MCF 10A (cell line): ENCODE measurements at regions of chr19 and their contacts with region 1.

Region 1: GRCh38 chr19:33176670-33177416 is 17.3 kb upstream of the LRP3 start:
- DNase-seq: peak; percentile 99
- H3K4me3 Mint-ChIP-seq: peak overlapping the region; percentile 93
- H3K27ac Mint-ChIP-seq: peak overlapping the region; percentile 66
- H3K4me1 Mint-ChIP-seq: peaks cover 9% of the 10 kb centered on the region
- H3K27me3 Mint-ChIP-seq: no peaks in the 10 kb centered on the region
- CTCF ChIP-seq: no peak

Region 2: GRCh38 chr19:33086955-33087354 is 89.9 kb before region 1 on chr19:
- CTCF ChIA-PET with region 1: no interaction called
- POLR2A ChIA-PET with region 1: no interaction called
- intact Hi-C with region 1: no loop called
- DNase-seq: no peak
- H3K4me3 Mint-ChIP-seq: no peak overlapping the region
- H3K27ac Mint-ChIP-seq: no peak overlapping the region
- H3K4me1 Mint-ChIP-seq: peaks cover 2% of the 10 kb centered on the region
- H3K27me3 Mint-ChIP-seq: no peaks in the 10 kb centered on the region
- CTCF ChIP-seq: no peak

Region 3: GRCh38 chr19:33098023-33098652 is 78.7 kb before region 1 on chr19:
- CTCF ChIA-PET with region 1: no interaction called
- POLR2A ChIA-PET with region 1: no interaction called
- intact Hi-C with region 1: no loop called
- DNase-seq: peak; percentile 29
- H3K4me3 Mint-ChIP-seq: no peak overlapping the region
- H3K27ac Mint-ChIP-seq: no peak overlapping the region
- H3K4me1 Mint-ChIP-seq: peaks cover 12% of the 10 kb centered on the region
- H3K27me3 Mint-ChIP-seq: no peaks in the 10 kb centered on the region
- CTCF ChIP-seq: no peak

Region 4: DNA sequence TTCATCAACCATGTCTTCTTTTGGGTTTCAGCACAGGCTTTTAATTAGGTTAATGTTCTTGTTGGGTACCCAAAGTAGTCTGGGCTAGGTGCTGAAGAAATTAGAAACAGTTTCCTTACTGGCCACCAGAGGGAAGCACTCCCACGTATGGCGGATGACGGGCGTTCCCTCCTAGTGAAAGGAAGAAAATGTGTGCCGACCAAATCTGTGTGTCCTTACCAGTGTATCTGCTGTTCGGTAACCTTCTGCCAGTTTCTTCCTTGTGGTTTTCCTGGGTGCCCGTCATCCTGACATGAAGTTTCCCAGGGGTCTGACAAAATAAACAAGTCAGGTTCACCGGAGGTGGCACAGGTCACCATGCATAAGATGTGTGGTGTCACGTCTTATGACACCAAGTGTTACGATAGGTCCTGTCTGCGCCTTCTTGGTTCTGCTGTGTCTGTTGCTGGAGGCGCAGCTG is 50.9 kb before region 1 on chr19:
- CTCF ChIA-PET with region 1: interaction called, 17 read pairs
- POLR2A ChIA-PET with region 1: interaction called, 3 read pairs
- intact Hi-C with region 1: loop called (anchors 2 kb)
- DNase-seq: peak; percentile 71
- H3K4me3 Mint-ChIP-seq: no peak overlapping the region
- H3K27ac Mint-ChIP-seq: no peak overlapping the region
- H3K4me1 Mint-ChIP-seq: no peaks in the 10 kb centered on the region
- H3K27me3 Mint-ChIP-seq: no peaks in the 10 kb centered on the region
- CTCF ChIP-seq: peak; percentile 72

Region 5: GRCh38 chr19:33156334-33156733 is 20.5 kb before region 1 on chr19:
- CTCF ChIA-PET with region 1: interaction called, 11 read pairs
- POLR2A ChIA-PET with region 1: interaction called, 13 read pairs
- intact Hi-C with region 1: no loop called
- DNase-seq: peak; percentile 80
- H3K4me3 Mint-ChIP-seq: no peak overlapping the region
- H3K27ac Mint-ChIP-seq: no peak overlapping the region
- H3K4me1 Mint-ChIP-seq: no peaks in the 10 kb centered on the region
- H3K27me3 Mint-ChIP-seq: no peaks in the 10 kb centered on the region
- CTCF ChIP-seq: no peak

Region 6: DNA sequence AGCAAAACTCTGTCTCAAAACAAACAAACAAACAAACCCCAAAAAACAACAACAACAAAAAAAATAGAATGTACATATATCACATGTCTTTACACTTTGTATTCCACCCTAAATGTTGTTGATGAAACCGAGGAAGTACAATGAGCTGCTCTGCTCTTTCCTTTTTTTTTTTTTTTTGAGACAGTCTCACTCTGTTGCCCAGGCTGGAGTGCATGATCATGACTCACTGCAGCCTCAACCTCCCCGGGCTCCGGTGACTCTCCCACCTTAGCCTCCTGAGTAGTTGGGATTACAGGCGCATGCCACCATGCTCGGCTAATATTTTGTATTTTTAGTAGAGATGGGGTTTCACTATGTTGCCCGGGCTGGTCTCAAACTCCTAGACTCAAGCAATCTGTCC is 13.4 kb before region 1 on chr19:
- CTCF ChIA-PET with region 1: interaction called, 8 read pairs
- POLR2A ChIA-PET with region 1: interaction called, 14 read pairs
- intact Hi-C with region 1: no loop called
- DNase-seq: no peak
- H3K4me3 Mint-ChIP-seq: no peak overlapping the region
- H3K27ac Mint-ChIP-seq: no peak overlapping the region
- H3K4me1 Mint-ChIP-seq: no peaks in the 10 kb centered on the region
- H3K27me3 Mint-ChIP-seq: no peaks in the 10 kb centered on the region
- CTCF ChIP-seq: no peak

Region 7: GRCh38 chr19:33193865-33194362 is 17.1 kb after region 1 on chr19 and contains the start of gene LRP3:
- CTCF ChIA-PET with region 1: interaction called, 5 read pairs
- POLR2A ChIA-PET with region 1: interaction called, 18 read pairs
- intact Hi-C with region 1: no loop called
- DNase-seq: no peak
- H3K4me3 Mint-ChIP-seq: peak within 1 kb of the TSS; percentile 72
- H3K27ac Mint-ChIP-seq: peak within 1 kb of the TSS; percentile 31
- H3K4me1 Mint-ChIP-seq: no peaks in the 10 kb centered on the region
- H3K27me3 Mint-ChIP-seq: peaks cover 14% of the 10 kb centered on the region
- CTCF ChIP-seq: no peak
- total RNA-seq, gene LRP3: 7.7 and 9.5 TPM in 2 replicates